ENCODE measurements at regions of chr3 and their contacts with region 1.

Region 1: GRCh38 chr3:153734777-153735551 is 386.2 kb upstream of the ARHGEF26 start:
- DNase-seq: peak; percentile 52
- H3K4me3 Mint-ChIP-seq: peak overlapping the region; percentile 8
- H3K27ac Mint-ChIP-seq: peak overlapping the region; percentile 73
- H3K4me1 Mint-ChIP-seq: peaks cover 29% of the 10 kb centered on the region
- H3K27me3 Mint-ChIP-seq: no peaks in the 10 kb centered on the region
- CTCF ChIP-seq: no peak

Region 2: GRCh38 chr3:152662157-152662556 is 1072.8 kb before region 1 on chr3:
- CTCF ChIA-PET with region 1: no interaction called
- intact Hi-C with region 1: loop called (anchors 10 kb)
- DNase-seq: no peak
- H3K4me3 Mint-ChIP-seq: no peak overlapping the region
- H3K27ac Mint-ChIP-seq: no peak overlapping the region
- H3K4me1 Mint-ChIP-seq: no peaks in the 10 kb centered on the region
- H3K27me3 Mint-ChIP-seq: no peaks in the 10 kb centered on the region
- CTCF ChIP-seq: no peak

Measured in Calu3 (cell line).